ENCODE measurements at regions of chr9 and their contacts with region 1.

Region 1: GRCh38 chr9:99140685-99141314 is 35.9 kb downstream of the TGFBR1 start:
- DNase-seq: peak in 1 of 3 donors; percentile 42
- ATAC-seq: peak; percentile 76
- H3K4me3 ChIP-seq: no peak overlapping the region
- H3K4me1 ChIP-seq: peaks cover 5% of the 10 kb centered on the region
- CTCF ChIP-seq: peak; percentile 31

Region 2: DNA sequence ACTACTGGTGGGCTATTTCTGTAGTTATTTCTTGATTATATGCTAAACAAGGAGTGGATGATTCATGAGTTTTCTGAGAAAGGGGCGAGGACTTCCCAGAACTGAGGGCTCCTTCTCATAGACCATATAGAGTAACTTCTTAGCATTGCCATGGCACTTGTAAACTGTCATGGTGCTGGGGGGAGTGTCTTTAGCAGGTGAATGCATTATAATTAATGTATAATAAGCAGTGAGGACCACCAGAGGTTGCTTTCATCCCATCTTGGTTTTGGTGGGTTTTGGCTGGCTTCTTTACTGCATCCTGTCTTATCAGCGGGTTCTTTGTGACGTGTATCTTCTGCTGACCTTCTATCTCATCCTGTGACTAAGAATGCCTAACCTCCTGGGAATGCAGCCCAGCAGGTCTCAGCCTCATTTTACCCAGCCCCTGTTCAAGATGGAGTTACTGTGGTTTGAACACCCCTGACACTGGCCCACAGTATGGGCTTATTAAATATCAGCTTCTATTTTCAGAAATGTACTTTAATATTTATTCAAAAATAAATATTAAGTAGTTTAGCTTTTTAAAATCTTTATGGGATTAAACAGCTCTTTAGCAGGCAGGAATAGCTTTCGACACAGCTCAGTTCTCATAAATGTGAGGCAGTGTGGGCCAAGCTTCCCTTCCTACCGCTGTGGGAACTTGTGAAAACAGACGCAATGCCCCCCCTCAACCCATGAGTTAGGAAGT is 288.9 kb before region 1 on chr9:
- intact Hi-C with region 1: loop called in 1 of 2 experiments (anchors 10 kb)
- DNase-seq: no peak
- ATAC-seq: no peak
- H3K4me3 ChIP-seq: no peak overlapping the region
- H3K4me1 ChIP-seq: no peaks in the 10 kb centered on the region
- CTCF ChIP-seq: no peak

Region 3: DNA sequence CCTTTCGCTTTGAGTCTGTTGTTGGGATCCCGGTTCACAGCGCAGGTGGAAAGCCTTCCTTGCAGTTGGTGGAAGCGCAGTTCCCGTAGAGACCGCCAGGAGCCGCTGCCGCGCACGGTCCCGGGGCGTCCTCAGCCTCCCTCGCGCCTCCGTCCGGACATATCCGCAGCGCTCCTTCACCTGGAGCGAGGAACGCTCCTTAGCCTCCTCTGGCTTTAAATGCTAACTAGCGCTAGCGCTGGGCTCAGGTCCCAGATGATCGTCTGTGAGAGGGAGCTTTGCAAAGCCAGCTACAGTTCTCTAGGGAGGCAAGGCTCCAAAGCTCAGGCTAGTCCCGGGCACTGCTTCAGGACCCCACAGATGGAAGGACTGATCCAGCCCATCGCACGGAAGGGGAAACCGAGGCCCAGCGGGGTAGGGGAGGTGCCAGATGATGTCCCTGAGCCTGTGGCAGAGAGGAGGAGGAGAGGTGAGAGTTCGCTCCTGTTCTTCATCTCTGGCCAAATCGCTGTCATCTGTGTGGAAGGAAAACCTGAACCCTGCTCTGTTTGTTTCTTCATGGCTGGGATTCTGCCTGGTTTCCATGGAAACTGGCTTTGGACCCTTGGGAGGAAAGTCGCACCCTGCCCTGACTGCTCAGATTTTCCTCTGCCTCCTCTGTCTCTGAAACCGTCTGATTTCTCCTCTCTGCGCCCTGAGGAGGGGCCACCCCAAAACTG is 165.6 kb before region 1 on chr9:
- intact Hi-C with region 1: loop called in 1 of 2 experiments (anchors 10 kb)
- DNase-seq: peak; percentile 82 to 92 (median 92)
- ATAC-seq: peak; percentile 97
- H3K4me3 ChIP-seq: no peak overlapping the region
- H3K4me1 ChIP-seq: peaks cover 5% of the 10 kb centered on the region
- CTCF ChIP-seq: peak; percentile 99